BJ (cell line): ENCODE measurements at regions of chr9 and their contacts with region 1.

Region 1: DNA sequence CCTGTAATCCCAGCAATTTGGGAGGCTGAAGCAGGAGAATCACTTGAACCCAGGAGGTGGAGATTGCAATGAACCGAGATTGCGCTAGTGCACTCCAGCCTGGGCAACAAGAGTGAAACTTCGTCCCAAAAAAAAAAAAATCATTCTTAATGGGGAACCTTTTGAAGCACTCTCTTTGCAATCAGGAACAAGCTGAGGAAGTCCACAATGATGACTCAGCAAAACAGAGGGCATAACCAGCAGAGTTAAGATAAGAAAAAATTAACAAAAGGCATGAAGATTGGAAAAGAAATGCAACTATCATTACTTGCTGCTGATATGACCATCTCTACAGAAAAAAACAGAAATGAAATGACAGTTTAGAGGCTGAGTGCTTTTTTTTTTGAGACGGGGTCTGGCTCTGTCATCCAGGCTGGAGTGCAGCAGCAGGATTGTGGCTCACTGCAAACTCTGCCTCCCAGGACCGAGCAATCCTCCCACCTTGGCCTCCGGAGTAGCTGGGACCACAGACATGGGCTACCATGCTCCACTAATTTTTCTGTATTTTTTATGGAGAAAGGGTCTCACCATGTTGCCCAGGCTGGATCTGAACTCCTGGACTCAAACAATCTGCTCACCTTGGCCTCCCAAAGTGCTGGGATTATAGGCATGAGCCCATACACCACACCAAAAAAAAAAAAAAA is 88.0 kb downstream of the FNBP1 start:
- DNase-seq: no peak
- H3K4me3 ChIP-seq: no peak overlapping the region
- H3K27me3 ChIP-seq: no peaks in the 10 kb centered on the region
- CTCF ChIP-seq: no peak

Region 2: GRCh38 chr9:130069048-130069447 is 114.0 kb after region 1 on chr9:
- CTCF ChIA-PET with region 1: no interaction called
- POLR2A ChIA-PET with region 1: no interaction called
- DNase-seq: no peak
- H3K4me3 ChIP-seq: no peak overlapping the region
- H3K27me3 ChIP-seq: no peaks in the 10 kb centered on the region
- CTCF ChIP-seq: no peak

Region 3: GRCh38 chr9:130290291-130291181 is 335.5 kb after region 1 on chr9:
- CTCF ChIA-PET with region 1: no interaction called
- POLR2A ChIA-PET with region 1: interaction called, 16 read pairs
- DNase-seq: no peak
- H3K4me3 ChIP-seq: no peak overlapping the region
- H3K27me3 ChIP-seq: peaks cover 43% of the 10 kb centered on the region
- CTCF ChIP-seq: no peak

Region 4: DNA sequence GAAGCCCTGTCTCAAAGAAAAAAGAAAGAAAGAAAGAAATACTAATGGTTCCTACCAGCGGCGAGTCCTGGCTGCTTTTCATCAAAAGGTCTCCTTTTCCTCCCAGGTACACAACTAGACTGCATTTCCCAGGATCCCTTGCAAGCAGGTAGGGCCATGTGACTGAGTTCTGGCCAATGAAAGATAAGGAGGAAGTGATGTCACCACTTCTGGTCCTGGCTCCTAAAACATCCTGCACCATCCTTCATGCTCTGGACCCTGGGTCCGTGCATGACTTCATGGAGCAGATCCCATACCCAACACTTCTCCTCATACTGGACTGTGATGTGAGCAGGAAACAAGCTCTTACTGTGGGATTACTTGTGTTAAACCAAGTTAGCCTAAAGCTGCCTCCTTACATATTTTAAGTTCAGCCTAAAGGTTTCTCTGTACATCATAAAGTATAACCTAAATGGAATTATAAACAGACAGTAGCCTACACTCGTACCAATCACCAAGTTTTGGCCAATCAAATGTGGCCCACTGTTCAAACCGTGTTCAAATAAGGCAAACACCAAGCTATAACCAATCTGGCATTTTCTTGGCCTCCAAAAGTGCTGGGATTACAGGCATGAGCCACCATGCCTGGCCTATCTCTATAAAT is 594.2 kb after region 1 on chr9:
- CTCF ChIA-PET with region 1: no interaction called
- POLR2A ChIA-PET with region 1: no interaction called
- DNase-seq: no peak
- H3K4me3 ChIP-seq: no peak overlapping the region
- H3K27me3 ChIP-seq: 0 out of 2 replicates have a peak, but pooled peaks cover 5% of the 10 kb centered on the region
- CTCF ChIP-seq: no peak